CD8-positive, alpha-beta T cell (primary cell): ENCODE measurements at regions of chrX and their contacts with region 1.

Region 1: DNA sequence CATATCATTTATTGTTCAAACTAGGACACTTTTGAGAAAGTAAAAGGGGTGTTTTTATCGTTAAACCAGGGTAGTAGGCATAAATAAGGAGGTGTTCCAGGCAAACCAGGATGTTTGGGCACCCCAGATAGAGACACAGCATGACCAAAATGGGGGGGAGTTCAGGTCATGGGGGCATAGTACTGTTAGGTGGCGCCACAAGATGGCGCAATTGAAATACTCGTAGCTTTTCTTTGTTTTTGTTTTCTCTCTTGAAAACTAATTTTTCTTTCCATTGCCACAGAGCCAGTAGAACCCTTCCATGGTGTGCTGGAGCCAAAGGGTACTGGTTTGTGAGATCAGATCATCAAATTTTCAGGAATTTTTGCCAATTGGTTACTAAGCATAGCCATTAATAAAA is 283.4 kb downstream of the BCOR start:
- DNase-seq: peak in 8 of 9 experiments; percentile 3 to 76 (median 49)
- ATAC-seq: peak; percentile 64
- H3K4me3 ChIP-seq: no peak overlapping the region
- H3K4me3 Mint-ChIP-seq: no peak overlapping the region
- H3K27ac ChIP-seq: no peak overlapping the region
- H3K27ac Mint-ChIP-seq: no peak overlapping the region
- H3K4me1 ChIP-seq: no peaks in the 10 kb centered on the region
- H3K4me1 Mint-ChIP-seq: peaks cover 8% of the 10 kb centered on the region
- H3K27me3 ChIP-seq: no peaks in the 10 kb centered on the region
- H3K27me3 Mint-ChIP-seq: peaks cover 3% of the 10 kb centered on the region
- CTCF ChIP-seq: peak; percentile 56

Region 2: DNA sequence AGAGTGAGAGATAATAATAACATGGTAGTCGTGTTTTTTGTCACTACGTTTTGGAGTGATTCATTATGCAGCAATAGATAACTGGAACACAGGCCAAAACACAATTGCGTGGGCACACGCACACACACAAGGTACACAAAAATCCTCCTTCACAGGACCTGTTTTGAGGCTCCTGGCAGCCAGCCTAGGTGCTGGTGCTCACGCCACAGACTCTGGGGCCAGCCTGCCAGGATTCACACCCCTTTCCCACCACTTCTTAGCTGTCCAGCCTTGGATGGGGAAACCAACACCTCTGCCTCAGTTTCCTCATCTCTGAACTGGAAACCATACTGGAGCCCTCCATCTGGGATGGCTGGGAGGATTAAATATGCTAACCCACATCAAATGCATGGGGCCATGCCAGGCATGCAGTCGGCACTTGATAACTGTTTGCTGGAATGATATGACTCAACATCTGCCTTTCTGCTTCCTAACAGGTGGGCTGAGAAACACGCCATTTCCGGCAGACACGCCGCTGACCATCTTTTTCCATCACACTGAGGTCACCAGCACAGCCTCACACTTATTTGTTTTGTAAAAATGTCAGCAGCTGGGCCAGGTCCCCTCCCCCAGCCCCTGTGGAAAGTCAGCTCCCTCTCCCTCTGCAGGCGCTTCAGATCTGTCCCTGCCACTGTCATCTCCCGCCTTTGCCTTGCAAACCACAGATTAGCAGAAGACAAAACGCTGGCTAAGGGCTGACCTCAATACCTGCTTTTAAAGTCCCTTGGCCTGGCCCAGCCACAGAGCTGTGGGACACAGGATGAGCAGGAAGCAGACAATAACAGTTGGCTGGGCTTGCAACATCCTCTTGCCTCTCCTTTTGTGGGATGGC is 45.8 kb after region 1 on chrX:
- CTCF ChIA-PET with region 1: interaction called, 5 read pairs
- POLR2A ChIA-PET with region 1: no interaction called
- intact Hi-C with region 1: loop called in 1 of 2 experiments (anchors 2 kb)
- DNase-seq: peak; percentile 9 to 85 (median 68)
- ATAC-seq: peak; percentile 48
- H3K4me3 ChIP-seq: no peak overlapping the region
- H3K4me3 Mint-ChIP-seq: no peak overlapping the region
- H3K27ac ChIP-seq: no peak overlapping the region
- H3K27ac Mint-ChIP-seq: peak overlapping the region; percentile 83
- H3K4me1 ChIP-seq: peaks cover 26% of the 10 kb centered on the region
- H3K4me1 Mint-ChIP-seq: peaks cover 31% of the 10 kb centered on the region
- H3K27me3 ChIP-seq: no peaks in the 10 kb centered on the region
- H3K27me3 Mint-ChIP-seq: no peaks in the 10 kb centered on the region
- CTCF ChIP-seq: no peak

Region 3: GRCh38 chrX:40153335-40154249 is 339.2 kb after region 1 on chrX:
- CTCF ChIA-PET with region 1: no interaction called
- POLR2A ChIA-PET with region 1: no interaction called
- intact Hi-C with region 1: loop called in 1 of 2 experiments (anchors 5 kb)
- DNase-seq: peak in 6 of 9 experiments; percentile 53 to 87 (median 68)
- ATAC-seq: peak; percentile 59
- H3K4me3 ChIP-seq: peak overlapping the region; percentile 45 to 47
- H3K4me3 Mint-ChIP-seq: peak overlapping the region; percentile 81
- H3K27ac ChIP-seq: no peak overlapping the region
- H3K27ac Mint-ChIP-seq: no peak overlapping the region
- H3K4me1 ChIP-seq: no peaks in the 10 kb centered on the region
- H3K4me1 Mint-ChIP-seq: peaks cover 21% of the 10 kb centered on the region
- H3K27me3 ChIP-seq: no peaks in the 10 kb centered on the region
- H3K27me3 Mint-ChIP-seq: no peaks in the 10 kb centered on the region
- CTCF ChIP-seq: no peak

Region 4: GRCh38 chrX:40266490-40267333 is 452.3 kb after region 1 on chrX:
- CTCF ChIA-PET with region 1: interaction called, 11 read pairs
- POLR2A ChIA-PET with region 1: no interaction called
- intact Hi-C with region 1: loop called (anchors 1 kb)
- DNase-seq: peak; percentile 10 to 72 (median 46)
- ATAC-seq: peak; percentile 89
- H3K4me3 ChIP-seq: peak overlapping the region; percentile 57 to 65
- H3K4me3 Mint-ChIP-seq: peak overlapping the region; percentile 79
- H3K27ac ChIP-seq: no peak overlapping the region
- H3K27ac Mint-ChIP-seq: no peak overlapping the region
- H3K4me1 ChIP-seq: peaks cover 11% of the 10 kb centered on the region
- H3K4me1 Mint-ChIP-seq: peaks cover 6% of the 10 kb centered on the region
- H3K27me3 ChIP-seq: no peaks in the 10 kb centered on the region
- H3K27me3 Mint-ChIP-seq: no peaks in the 10 kb centered on the region
- CTCF ChIP-seq: peak; percentile 41